ENCODE measurements at regions of chr5 and their contacts with region 1.

Region 1: DNA sequence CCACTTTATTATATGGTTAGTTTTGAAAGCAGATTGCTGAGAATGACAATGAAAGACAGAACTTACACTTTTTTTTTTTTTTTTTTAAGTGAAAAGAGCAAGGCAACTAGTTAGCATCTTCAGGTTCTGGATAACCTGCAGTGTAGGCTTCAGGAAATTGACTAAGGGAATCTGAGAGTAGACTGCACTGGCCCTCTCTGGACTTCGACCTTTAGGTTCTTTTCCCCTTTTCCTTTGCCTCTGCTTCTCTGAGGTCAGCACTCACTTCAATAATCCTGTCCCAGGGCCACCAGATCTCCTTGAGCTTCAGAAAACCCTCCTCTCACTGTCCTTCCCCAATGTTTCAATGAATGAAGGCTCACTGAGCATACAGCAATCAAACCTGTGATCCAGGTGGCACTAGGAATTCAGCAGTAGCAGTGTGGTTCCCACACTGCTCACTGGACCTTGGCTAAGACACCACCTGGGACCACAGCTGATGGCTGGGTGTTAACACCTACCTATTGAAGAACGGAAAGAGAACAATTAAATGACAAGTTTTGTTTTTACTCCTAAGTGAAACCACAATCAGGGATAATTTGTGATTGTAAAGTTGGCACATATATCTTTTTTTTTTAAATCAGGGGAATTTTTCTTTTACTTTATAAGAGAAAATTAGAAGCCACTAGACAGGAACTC is 85.8 kb upstream of the IL6ST start:
- DNase-seq: peak; percentile 72
- H3K4me3 Mint-ChIP-seq: peak overlapping the region; percentile 5
- H3K27ac Mint-ChIP-seq: peak overlapping the region; percentile 90
- H3K4me1 Mint-ChIP-seq: peaks cover 72% of the 10 kb centered on the region
- H3K27me3 Mint-ChIP-seq: no peaks in the 10 kb centered on the region

Region 2: GRCh38 chr5:56056875-56057274 is 23.6 kb before region 1 on chr5:
- CTCF ChIA-PET with region 1: no interaction called
- intact Hi-C with region 1: loop called (anchors 1 kb)
- DNase-seq: no peak
- H3K4me3 Mint-ChIP-seq: peak overlapping the region; percentile 56
- H3K27ac Mint-ChIP-seq: peak overlapping the region; percentile 81
- H3K4me1 Mint-ChIP-seq: peaks cover 73% of the 10 kb centered on the region
- H3K27me3 Mint-ChIP-seq: no peaks in the 10 kb centered on the region

Region 3: DNA sequence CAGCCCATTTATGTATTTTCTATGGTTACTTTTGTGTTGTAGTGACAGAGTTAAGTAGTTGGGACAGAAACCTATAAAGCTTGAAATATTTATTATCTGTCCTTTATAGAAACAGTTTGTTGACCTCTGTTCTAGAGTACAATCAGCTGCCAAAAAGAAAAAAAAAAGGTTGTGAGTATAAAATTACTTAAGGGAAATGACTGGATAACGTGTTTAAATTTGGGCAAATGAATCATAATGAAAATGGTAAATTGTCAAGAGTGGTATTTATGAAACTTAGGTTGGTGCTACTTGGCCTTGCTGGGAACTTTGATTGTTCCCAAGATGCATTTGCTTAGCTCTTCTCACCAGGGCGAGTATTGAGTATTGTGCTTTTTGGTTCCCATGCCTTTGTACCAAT is 15.5 kb before region 1 on chr5:
- CTCF ChIA-PET with region 1: interaction called, 3 read pairs
- intact Hi-C with region 1: loop called (anchors 1 kb)
- DNase-seq: peak; percentile 52
- H3K4me3 Mint-ChIP-seq: peak overlapping the region; percentile 10
- H3K27ac Mint-ChIP-seq: peak overlapping the region; percentile 70
- H3K4me1 Mint-ChIP-seq: peaks cover 75% of the 10 kb centered on the region
- H3K27me3 Mint-ChIP-seq: no peaks in the 10 kb centered on the region

Region 4: GRCh38 chr5:56105511-56106291 is 25.2 kb after region 1 on chr5:
- CTCF ChIA-PET with region 1: interaction called, 3 read pairs
- intact Hi-C with region 1: loop called (anchors 1 kb)
- DNase-seq: no peak
- H3K4me3 Mint-ChIP-seq: peak overlapping the region; percentile 58
- H3K27ac Mint-ChIP-seq: peak overlapping the region; percentile 91
- H3K4me1 Mint-ChIP-seq: peaks cover 76% of the 10 kb centered on the region
- H3K27me3 Mint-ChIP-seq: no peaks in the 10 kb centered on the region

Region 5: DNA sequence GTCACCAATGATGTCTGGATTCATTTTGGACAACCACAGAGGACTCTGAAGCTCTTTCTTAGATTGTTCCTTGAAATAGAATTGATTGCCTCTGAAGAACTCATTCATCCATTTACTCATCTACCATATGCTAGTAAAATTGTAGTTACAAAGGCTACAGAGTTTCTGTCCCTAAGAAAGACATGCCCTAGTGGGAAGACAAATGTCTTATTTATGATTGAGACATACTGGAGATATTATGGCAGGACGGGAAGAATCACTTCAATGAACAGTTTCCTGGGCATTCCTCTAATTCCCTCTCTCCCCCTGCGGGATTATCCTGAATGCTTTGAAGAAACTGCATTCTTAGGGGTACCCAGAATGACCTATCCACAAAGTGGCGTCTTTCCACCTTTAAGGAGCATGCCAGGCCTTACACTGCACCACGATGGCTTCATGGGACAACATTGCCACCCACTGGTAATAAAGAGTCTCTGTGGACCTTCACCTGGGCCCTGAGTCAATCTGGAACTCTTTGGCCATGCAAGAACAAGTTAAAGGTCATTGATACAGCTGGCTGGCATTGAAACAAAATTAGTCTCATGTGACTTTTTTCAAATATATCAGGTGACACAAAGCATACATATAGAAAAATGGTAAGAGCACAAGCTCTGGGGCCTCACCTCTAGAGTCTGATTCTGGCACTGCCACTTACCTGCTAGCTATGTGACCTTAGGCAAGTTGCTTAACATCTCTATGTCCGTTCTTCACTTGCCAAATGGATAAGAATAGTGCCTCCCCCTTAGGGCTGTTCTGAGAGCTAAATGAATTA is 120.5 kb after region 1 on chr5:
- CTCF ChIA-PET with region 1: no interaction called
- intact Hi-C with region 1: loop called (anchors 1 kb)
- DNase-seq: peak; percentile 83
- H3K4me3 Mint-ChIP-seq: no peak overlapping the region
- H3K27ac Mint-ChIP-seq: no peak overlapping the region
- H3K4me1 Mint-ChIP-seq: peaks cover 28% of the 10 kb centered on the region
- H3K27me3 Mint-ChIP-seq: no peaks in the 10 kb centered on the region

Region 6: DNA sequence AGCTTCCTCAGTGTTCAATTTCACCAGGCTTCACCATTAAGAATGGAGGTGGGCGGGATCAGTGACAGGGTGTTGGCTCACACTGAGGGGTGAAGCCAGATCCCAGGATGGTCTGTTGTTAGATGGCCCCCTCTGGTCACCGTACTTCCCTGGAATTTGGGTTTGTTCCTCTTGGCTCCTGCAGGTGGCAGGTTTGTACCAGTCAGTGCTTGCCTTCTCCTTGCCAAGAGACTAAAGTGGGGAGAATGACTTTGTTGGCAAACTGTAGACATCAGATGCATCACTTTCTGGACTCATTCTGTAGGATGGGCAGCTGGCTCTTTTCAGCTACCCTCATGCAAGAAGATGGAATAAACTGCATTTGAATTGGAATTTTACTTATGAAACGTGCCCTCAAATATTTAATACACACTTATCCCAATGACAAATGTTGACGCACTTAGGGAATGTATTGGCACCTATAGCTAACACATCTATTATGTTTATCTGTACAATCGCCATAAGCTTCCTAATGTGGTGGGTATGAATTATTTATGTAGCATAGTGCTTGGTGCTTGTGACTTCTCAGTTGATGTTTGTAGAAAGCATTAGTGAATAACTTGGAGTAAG is 184.0 kb after region 1 on chr5:
- CTCF ChIA-PET with region 1: no interaction called
- intact Hi-C with region 1: no loop called
- DNase-seq: peak; percentile 49
- H3K4me3 Mint-ChIP-seq: no peak overlapping the region
- H3K27ac Mint-ChIP-seq: no peak overlapping the region
- H3K4me1 Mint-ChIP-seq: peaks cover 2% of the 10 kb centered on the region
- H3K27me3 Mint-ChIP-seq: no peaks in the 10 kb centered on the region

Region 7: GRCh38 chr5:56557198-56557597 is 476.7 kb after region 1 on chr5:
- CTCF ChIA-PET with region 1: no interaction called
- intact Hi-C with region 1: no loop called
- DNase-seq: no peak
- H3K4me3 Mint-ChIP-seq: no peak overlapping the region
- H3K27ac Mint-ChIP-seq: no peak overlapping the region
- H3K4me1 Mint-ChIP-seq: no peaks in the 10 kb centered on the region
- H3K27me3 Mint-ChIP-seq: no peaks in the 10 kb centered on the region